Activated CD4-positive, alpha-beta memory T cell treated with anti-CD3 and anti-CD28 coated beads for 36 hours (primary cell): ENCODE measurements at regions of chr15 and their contacts with region 1.

Region 1: DNA sequence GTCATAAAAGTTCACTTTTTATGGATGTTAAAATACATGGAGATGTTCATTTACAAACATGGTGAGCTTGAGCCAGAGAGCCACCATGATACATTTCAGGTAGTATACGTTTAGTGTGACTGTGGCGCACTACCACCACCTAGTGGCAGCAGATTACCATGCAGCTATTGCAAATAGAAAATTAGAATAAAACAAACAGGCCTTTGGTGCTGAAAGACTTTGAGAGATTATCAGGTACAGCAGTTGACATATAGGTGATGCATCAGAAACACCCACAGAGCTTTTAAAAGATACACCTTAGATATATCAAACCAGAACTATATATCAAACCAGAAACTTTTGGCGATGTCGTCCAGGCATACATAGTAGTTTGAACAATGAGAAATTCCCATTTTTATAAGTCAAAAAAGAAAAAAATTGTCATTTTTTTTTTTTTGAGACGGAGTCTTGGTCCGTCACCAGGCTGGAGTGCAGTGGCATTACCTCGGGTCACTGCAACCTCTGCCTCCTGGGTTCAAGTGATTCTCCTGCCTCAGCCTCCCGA is 42.0 kb upstream of the ICE2 start:
- DNase-seq: peak; percentile 88
- H3K4me3 Mint-ChIP-seq: peak overlapping the region; percentile 20
- H3K27ac Mint-ChIP-seq: peak overlapping the region; percentile 56
- H3K4me1 Mint-ChIP-seq: peaks cover 60% of the 10 kb centered on the region
- H3K27me3 Mint-ChIP-seq: no peaks in the 10 kb centered on the region

Region 2: GRCh38 chr15:60362321-60363086 is 158.4 kb before region 1 on chr15:
- CTCF ChIA-PET with region 1: interaction called, 100 read pairs
- POLR2A ChIA-PET with region 1: interaction called, 12 read pairs
- intact Hi-C with region 1: loop called (anchors 1 kb)
- DNase-seq: peak; percentile 72
- H3K4me3 Mint-ChIP-seq: no peak overlapping the region
- H3K27ac Mint-ChIP-seq: peak overlapping the region; percentile 63
- H3K4me1 Mint-ChIP-seq: peaks cover 25% of the 10 kb centered on the region
- H3K27me3 Mint-ChIP-seq: peaks cover 2% of the 10 kb centered on the region

Region 3: DNA sequence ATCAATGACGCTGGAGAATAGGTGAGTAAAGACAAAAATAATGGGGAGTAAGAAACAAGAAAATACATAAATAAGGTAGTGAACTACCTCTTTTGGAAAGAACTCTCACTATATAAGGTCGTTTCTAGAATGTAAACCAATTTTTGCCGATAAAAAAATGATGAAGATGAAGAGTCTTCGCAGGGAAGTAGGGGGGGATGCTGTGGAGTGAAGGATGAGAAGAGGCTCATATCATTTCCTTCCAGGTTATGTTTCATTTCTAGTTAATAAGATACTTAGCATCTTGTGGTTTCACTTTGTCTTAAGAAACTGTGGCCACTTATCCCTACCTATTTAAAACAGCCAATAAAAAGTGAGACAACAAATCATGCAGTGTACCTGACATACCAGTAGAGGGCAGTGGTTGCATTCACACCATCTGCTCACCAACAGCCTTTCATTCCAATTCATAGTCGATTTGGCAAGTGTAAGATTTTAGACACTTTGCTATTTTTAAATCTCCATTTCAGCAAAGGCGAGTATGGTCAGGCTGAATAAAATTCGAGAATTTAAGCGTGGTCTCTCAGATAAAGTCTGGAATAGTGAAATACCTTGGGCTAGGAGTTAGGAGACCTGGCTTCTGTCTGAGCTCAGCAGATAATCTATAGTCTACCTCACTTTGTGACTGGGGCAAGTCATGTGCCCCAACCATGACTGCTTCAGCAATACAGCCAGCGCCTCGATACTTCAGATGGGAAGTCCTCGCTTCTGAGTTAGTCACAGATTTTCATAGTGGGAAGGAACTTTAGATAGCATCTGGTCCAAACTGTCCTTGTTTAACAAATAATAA is 13.1 kb before region 1 on chr15:
- CTCF ChIA-PET with region 1: interaction called, 196 read pairs
- POLR2A ChIA-PET with region 1: interaction called, 21 read pairs
- intact Hi-C with region 1: loop called (anchors 1 kb)
- DNase-seq: peak; percentile 56
- H3K4me3 Mint-ChIP-seq: no peak overlapping the region
- H3K27ac Mint-ChIP-seq: peak overlapping the region; percentile 69
- H3K4me1 Mint-ChIP-seq: peaks cover 56% of the 10 kb centered on the region
- H3K27me3 Mint-ChIP-seq: no peaks in the 10 kb centered on the region

Region 4: GRCh38 chr15:60568301-60568742 is 47.4 kb after region 1 on chr15:
- CTCF ChIA-PET with region 1: interaction called, 21 read pairs
- POLR2A ChIA-PET with region 1: interaction called, 3 read pairs
- intact Hi-C with region 1: no loop called
- DNase-seq: no peak
- H3K4me3 Mint-ChIP-seq: peak overlapping the region; percentile 35
- H3K27ac Mint-ChIP-seq: peak overlapping the region; percentile 85
- H3K4me1 Mint-ChIP-seq: peaks cover 91% of the 10 kb centered on the region
- H3K27me3 Mint-ChIP-seq: no peaks in the 10 kb centered on the region

Region 5: GRCh38 chr15:60932051-60932915 is 411.4 kb after region 1 on chr15:
- CTCF ChIA-PET with region 1: interaction called, 24 read pairs
- POLR2A ChIA-PET with region 1: interaction called, 6 read pairs
- intact Hi-C with region 1: no loop called
- DNase-seq: peak; percentile 86
- H3K4me3 Mint-ChIP-seq: no peak overlapping the region
- H3K27ac Mint-ChIP-seq: no peak overlapping the region
- H3K4me1 Mint-ChIP-seq: peaks cover 15% of the 10 kb centered on the region
- H3K27me3 Mint-ChIP-seq: peaks cover 7% of the 10 kb centered on the region